ENCODE measurements at regions of chr2 and their contacts with region 1.

Region 1: DNA sequence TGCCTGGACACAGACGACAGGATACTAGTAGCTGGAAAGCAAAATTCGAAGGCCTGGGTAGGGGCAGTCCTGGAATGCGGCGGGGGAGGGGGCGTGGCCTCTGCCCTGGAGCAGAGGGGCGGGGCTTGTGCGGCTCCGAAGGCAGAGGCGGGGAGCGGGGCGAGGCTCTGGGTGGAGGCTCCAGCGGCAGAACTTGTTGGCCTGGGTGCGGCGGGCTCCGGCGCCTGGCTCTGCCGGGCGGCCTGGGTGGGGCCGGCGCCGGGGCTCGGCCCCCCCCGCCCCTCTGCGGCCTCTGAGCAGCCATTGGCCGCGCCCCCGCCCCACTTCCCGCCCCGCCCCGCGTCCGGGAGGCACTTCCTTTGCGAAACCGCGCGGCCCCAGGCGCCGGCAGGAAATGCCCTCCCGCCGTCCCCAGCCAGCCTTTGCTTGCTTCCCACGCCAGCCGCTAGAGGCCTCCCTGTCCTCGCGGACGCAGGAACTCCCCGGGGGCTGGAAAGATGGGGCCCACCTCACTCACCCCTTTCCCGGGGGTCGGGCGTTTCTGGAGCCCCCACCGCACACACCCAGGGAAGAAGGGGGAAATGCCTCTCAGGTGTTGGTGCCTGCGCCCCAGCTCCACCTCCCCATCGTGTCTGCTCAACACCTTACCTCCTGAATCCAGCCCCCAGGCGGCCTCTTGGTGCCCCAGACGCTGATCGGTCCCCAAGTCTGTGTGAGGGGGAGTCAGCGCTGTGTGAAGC is 6.7 kb downstream of the CTDSP1 start:
- ATAC-seq: peak; percentile 68 to 91 (median 88)
- H3K4me3 ChIP-seq: peak overlapping the region; percentile 34 to 59 (median 42)
- H3K27ac ChIP-seq: peak overlapping the region; percentile 81 to 91
- H3K4me1 ChIP-seq: peaks cover 22 to 26% of the 10 kb centered on the region in 2 donors

Region 2: DNA sequence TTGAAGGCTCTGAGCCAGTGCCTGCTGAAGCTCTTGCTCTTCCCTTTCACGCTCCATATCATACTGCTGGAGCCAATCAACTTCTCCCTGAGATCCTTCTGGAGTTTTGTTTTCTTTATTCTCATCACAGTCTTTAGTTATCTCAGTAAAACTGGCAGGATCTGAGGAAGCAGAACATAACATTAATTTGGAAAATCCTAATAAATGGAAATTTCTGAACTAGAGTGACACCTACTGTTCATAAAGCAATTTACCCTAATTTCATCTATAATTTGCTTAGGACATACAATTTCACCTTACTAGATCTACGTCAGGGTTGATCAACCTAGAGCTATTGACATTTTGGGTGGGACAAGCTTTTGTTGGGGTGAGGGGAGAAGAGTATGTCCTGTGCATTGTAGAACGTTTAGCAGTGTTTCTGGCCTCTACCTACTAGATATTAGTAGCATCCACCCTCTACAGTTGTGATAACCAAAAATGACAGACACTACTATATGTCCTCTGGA is 59.7 kb after region 1 on chr2:
- in situ Hi-C with region 1: loop called in 1 of 9 experiments (anchors 10 kb)
- ATAC-seq: peak in 2 of 8 experiments; percentile 33 to 36
- H3K4me3 ChIP-seq: no peak overlapping the region
- H3K27ac ChIP-seq: no peak overlapping the region
- H3K4me1 ChIP-seq: no peaks in the 10 kb centered on the region

Region 3: GRCh38 chr2:218648088-218648786 is 241.9 kb after region 1 on chr2:
- in situ Hi-C with region 1: loop called in 1 of 9 experiments (anchors 25 kb)
- ATAC-seq: peak; percentile 35 to 94 (median 66)
- H3K4me3 ChIP-seq: no peak overlapping the region
- H3K27ac ChIP-seq: no peak overlapping the region
- H3K4me1 ChIP-seq: no peaks in the 10 kb centered on the region